Calu3 (cell line): ENCODE measurements at regions of chr1 and their contacts with region 1.

Region 1: DNA sequence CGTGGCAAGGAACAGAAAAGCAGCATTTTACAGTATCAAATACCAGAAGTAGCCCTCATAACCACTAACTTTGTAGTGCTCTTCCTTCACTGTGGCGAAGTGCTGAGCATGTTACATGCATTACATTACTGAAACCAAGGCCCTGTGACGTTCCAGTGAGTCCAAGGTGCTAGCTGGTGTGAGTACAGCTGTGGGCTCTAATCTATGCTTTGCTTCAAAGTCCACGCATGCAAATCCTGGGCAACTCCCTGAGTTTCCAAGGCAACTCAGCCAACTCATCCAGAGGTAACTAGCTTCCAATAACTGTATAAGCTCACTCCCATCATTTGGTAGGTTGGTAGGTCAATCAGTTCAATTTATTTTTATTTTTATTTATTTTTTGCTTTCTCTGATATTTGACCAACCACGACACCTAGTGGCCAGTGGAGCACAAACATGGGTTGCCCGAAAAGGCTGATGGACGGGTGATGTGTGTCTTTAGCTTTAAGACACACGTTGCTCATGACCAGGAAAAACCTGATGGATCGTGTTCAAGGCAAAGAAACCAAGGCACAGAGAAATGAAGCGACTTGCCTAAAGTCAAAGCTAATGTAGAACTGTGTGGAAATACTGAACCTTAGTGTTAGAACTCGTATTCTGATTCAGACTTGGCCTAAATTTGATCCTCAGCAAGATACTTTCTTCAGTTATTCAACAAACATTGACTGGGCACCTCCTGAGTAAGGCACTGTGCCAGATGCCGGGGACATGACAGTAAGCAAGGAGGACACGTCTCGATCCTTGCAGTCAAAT is 73.0 kb downstream of the GNG12 start:
- DNase-seq: peak; percentile 67
- H3K4me3 Mint-ChIP-seq: no peak overlapping the region
- H3K27ac Mint-ChIP-seq: no peak overlapping the region
- H3K4me1 Mint-ChIP-seq: peaks cover 39% of the 10 kb centered on the region
- H3K27me3 Mint-ChIP-seq: no peaks in the 10 kb centered on the region
- CTCF ChIP-seq: peak; percentile 53

Region 2: DNA sequence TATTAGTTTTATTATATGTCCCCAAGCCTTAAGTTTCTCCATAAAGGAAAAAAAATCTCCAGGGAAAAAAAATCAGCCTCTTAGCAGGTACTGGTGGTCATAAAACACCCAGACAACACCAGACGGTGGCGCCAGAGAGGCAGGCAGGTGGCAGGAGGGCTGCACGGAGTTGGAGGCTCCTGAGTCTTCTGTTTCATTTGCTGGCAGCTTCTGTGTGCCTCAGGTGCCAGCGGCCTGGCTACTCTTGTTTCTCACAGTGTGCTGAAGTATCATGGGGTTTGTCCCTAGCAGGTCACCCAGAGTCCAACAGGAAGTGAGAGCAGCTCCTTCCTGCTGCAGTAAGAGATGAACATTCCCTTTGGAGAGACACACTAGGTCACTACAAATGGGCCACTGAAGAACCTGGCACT is 198.5 kb before region 1 on chr1:
- CTCF ChIA-PET with region 1: interaction called, 36 read pairs
- intact Hi-C with region 1: loop called (anchors 1 kb)
- DNase-seq: peak; percentile 96
- H3K4me3 Mint-ChIP-seq: no peak overlapping the region
- H3K27ac Mint-ChIP-seq: no peak overlapping the region
- H3K4me1 Mint-ChIP-seq: peaks cover 32% of the 10 kb centered on the region
- H3K27me3 Mint-ChIP-seq: no peaks in the 10 kb centered on the region
- CTCF ChIP-seq: peak; percentile 80

Region 3: DNA sequence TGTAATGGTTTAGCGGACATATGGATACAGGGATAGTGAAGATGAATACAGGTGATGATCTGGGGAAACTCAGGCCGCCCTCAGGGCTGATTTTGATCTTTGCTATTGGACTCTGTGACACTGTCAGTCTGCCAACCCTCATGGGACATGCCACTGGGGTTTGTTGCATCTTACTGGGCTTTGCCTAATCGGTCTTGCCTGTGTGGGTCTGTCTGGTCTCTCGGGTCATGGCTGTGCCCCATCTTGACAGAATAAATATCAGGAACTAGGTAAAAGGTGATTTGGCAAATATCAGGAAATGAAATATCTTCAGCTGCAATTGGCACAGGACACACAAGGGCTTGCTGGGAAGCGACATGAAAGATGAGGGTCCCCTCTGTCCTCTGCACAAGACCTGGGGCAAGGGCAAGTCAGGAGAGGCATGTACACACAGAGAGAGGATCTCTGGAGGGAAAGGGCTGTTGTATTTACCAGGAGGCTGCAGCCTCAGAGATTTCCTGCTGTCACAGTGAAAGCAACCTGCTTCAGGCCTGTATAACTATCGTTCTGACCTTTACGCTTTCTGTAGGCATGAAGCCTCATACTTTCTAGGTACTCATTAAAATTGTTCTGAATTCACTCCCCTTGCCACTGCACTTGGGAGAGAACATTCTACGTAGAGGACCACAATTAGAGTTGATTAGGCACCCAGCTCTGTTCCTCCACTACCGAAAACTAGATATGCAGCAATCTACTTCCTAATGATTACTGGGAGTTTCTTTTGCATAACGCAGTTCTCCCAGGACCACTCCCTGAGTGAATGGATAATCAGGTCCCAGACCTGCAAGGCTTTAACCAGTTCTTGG is 127.2 kb before region 1 on chr1:
- CTCF ChIA-PET with region 1: no interaction called
- intact Hi-C with region 1: no loop called
- DNase-seq: no peak
- H3K4me3 Mint-ChIP-seq: no peak overlapping the region
- H3K27ac Mint-ChIP-seq: no peak overlapping the region
- H3K4me1 Mint-ChIP-seq: peaks cover 54% of the 10 kb centered on the region
- H3K27me3 Mint-ChIP-seq: no peaks in the 10 kb centered on the region
- CTCF ChIP-seq: no peak